Posterior vena cava (tissue), 2 donors: ENCODE measurements at regions of chr4 and their contacts with region 1.

Region 1: DNA sequence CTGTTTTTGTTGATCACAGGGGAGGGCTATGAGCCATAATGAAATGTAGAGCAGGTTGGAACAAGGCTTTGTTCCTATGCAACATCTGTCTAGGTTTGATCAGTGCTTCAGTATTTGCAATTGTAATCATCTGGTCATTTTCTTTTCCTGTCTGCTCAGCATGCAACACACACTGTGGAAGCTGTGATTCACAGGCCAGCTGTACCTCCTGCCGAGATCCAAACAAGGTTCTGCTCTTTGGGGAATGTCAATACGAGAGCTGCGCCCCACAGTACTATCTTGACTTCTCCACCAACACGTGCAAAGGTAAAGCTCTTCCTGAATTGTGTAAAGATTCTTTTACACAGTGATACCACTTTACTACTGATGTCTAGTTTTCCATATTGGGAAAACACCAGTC is 181.9 kb upstream of the ANXA3 start:
- DNase-seq: no peak

Region 2: DNA sequence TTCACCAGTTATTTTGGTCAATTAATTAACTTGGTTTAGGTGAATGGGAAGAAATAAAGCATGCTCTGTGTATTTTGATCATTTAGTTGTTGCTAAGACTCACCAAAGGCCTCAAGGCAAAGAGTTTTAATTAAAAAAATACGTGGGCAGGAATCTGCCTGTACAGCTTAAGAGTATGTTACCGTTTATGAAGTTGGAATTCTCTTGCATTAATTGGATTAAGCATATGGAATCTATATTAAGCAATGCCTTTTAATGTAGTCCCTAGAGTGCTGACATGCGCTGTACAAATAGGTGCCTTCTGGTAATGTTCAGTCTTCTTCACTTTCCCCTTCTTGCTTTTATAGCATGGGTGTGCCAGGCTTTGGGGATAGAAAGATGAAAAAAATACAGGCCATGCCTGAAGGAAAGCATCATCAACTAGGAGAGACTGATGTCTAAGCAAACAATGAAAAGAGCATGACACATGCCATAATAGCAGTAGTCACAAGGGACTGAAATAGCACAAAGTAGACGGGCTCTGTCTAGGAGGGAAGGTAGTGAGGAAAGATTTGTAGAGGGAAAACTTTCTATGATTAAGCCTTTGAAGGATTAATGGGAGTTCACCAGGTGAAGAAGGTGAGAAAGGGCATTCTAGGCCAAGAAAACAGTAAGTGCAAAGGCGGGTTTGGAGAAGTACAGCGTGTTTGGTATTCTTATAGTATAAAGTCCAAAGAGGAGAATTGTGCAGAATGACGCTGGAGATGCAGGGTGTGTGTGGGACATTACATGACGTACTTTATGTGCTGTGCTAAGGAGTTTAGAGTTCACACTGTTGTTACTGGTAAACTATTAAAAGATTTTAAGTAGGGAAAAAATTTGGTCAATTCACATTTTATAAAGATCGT is 44.2 kb before region 1 on chr4:
- intact Hi-C with region 1: loop called in 1 of 2 experiments (anchors 1 kb)
- DNase-seq: no peak

Region 3: DNA sequence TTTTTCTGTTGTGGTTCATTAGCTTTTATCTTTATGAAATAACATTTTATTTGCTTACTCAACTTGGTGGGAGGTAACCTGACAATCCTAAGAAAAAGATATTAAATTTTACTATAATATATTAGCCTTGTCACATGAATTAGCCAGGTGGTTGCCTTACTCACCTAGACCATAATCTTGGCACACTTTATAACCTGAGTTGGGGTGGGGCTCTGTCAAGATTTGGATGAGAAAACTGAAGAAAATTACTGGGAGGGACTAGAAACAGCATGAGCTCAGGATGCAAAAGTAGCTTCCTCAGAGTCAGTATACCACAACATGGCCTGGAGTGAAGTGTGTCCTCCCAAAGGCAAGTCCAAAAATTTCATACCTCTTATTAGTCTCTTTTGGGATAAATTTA is 17.0 kb after region 1 on chr4:
- intact Hi-C with region 1: no loop called
- DNase-seq: no peak